ENCODE measurements at regions of chr9 and their contacts with region 1.

Region 1: DNA sequence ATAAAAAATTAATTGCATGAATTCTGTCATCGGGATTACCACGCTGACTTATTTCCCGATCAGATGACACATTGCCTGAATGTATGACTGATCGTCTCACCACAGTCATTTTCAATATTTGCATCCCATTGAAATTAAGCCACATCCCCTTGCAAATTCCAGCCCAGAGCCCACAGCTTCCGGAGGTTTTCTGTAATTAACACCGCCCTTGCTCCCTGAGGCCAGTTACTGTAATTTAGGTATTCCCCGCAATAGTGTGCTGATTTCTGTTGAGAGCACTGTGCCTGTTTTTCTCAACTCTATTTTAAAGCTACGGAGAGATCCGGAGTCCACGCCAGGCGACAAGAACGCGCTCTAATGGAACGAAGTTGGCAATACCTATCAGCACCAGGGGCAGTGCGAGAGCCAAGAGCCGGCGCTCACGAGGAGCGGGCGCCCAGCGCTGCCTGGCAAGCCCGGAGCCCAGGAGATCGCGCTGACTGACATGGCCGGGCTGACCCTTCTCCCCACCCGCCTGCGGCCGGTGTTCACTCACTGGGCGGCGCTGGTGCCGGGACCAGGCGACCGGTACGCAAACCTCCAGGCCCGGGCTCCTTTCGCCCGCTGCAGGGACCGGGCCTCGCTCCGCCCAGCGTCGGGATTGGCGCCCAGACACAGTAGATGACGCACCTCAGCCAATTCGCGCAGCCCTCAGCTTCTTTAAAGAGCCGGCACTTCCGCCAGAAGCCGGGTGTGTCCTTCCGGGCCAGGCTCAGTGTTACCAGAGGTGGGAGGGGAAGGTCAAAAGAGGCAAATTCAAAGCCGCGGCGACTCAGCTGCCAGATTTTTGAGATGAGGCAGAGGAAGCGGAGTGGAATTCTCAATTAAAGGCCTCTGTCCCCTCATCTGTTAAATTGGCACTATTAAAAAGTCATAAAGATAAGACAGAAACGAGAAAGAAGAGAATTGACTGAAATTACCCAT is at the start of gene PLGRKT:
- DNase-seq: peak; percentile 95
- H3K4me3 Mint-ChIP-seq: peak within 1 kb of the TSS; percentile 92
- H3K27ac Mint-ChIP-seq: peak within 1 kb of the TSS; percentile 98
- H3K4me1 Mint-ChIP-seq: peaks cover 51% of the 10 kb centered on the region
- H3K27me3 Mint-ChIP-seq: no peaks in the 10 kb centered on the region
- total RNA-seq, gene PLGRKT: 48.9 to 51.4 TPM

Region 2: DNA sequence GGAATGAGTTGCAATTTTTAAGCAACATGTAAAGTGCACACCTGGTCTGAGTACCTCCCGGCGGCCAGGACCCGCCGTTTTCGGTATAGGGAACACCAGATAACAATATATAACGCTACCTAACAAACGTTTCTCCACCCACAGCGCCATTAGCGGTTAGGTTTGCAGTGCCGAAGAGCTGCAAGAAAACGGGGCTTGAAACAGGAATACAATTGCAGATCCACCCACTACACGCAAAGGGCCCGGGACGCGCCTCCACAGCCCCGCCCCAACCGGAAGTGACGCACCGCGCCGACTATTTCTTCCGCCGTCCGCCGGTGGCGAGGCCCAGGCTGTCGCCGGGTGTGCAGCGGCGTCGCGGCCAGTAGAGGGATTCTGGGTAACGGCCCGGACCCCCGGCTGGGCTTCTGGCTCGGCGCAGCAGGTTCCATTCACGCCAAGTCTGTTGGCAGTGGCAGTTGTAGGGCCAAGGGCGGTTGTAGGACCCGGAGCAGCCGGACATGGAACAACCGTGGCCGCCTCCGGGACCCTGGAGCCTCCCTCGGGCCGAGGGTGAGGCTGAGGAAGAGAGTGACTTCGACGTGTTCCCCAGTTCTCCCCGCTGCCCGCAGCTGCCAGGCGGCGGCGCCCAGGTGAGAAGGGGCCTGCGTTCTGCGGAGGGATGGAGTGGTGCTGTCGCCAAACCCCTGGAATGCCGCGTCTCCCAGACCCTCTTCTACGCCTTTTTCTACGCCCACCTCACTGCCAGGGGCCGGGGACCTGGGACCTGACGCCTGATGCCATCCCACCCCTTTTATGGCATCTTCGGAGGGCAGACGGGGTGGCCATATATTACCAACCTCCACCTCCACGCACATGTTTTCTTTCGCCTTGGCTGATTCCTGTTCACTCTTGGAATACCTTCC is 758.0 kb before region 1 on chr9 and contains the start of gene CDC37L1:
- CTCF ChIA-PET with region 1: no interaction called
- intact Hi-C with region 1: loop called (anchors 2 kb)
- DNase-seq: peak; percentile 99
- H3K4me3 Mint-ChIP-seq: no peak within 1 kb of the TSS
- H3K27ac Mint-ChIP-seq: no peak within 1 kb of the TSS
- H3K4me1 Mint-ChIP-seq: peaks cover 17% of the 10 kb centered on the region
- H3K27me3 Mint-ChIP-seq: no peaks in the 10 kb centered on the region
- total RNA-seq, gene CDC37L1: 13.7 to 14.5 TPM

Region 3: GRCh38 chr9:4832786-4833579 is 604.6 kb before region 1 on chr9:
- CTCF ChIA-PET with region 1: no interaction called
- intact Hi-C with region 1: loop called (anchors 5 kb)
- DNase-seq: peak; percentile 80
- H3K4me3 Mint-ChIP-seq: no peak overlapping the region
- H3K27ac Mint-ChIP-seq: peak overlapping the region; percentile 85
- H3K4me1 Mint-ChIP-seq: peaks cover 46% of the 10 kb centered on the region
- H3K27me3 Mint-ChIP-seq: no peaks in the 10 kb centered on the region

Region 4: GRCh38 chr9:5186416-5187169 is 250.9 kb before region 1 on chr9:
- CTCF ChIA-PET with region 1: interaction called, 12 read pairs
- intact Hi-C with region 1: loop called (anchors 1 kb)
- DNase-seq: peak; percentile 79
- H3K4me3 Mint-ChIP-seq: no peak overlapping the region
- H3K27ac Mint-ChIP-seq: no peak overlapping the region
- H3K4me1 Mint-ChIP-seq: peaks cover 13% of the 10 kb centered on the region
- H3K27me3 Mint-ChIP-seq: no peaks in the 10 kb centered on the region

Region 5: DNA sequence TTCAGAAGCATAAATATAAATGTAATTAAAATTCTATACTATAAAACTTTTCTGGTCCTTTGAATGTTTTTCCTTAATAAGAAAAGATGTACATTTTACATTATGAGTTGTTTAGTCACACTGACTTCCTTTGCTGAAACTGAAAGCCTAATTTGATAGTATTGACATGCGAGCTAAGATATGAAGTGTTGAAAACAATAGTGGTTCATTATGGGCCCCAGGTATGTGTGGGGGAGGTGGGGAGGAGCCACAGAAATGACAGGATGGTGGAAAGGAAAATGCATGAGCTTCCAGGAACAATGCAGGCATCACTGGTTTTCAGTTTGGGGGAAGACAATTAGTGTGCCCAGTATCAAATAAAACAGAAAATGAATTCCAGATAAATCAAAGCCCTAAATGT is 62.4 kb before region 1 on chr9:
- CTCF ChIA-PET with region 1: no interaction called
- intact Hi-C with region 1: loop called (anchors 1 kb)
- DNase-seq: peak; percentile 74
- H3K4me3 Mint-ChIP-seq: peak overlapping the region; percentile 1
- H3K27ac Mint-ChIP-seq: no peak overlapping the region
- H3K4me1 Mint-ChIP-seq: peaks cover 31% of the 10 kb centered on the region
- H3K27me3 Mint-ChIP-seq: no peaks in the 10 kb centered on the region

Region 6: GRCh38 chr9:5721279-5722087 is 283.9 kb after region 1 on chr9:
- CTCF ChIA-PET with region 1: no interaction called
- intact Hi-C with region 1: no loop called
- DNase-seq: no peak
- H3K4me3 Mint-ChIP-seq: no peak overlapping the region
- H3K27ac Mint-ChIP-seq: no peak overlapping the region
- H3K4me1 Mint-ChIP-seq: peaks cover 8% of the 10 kb centered on the region
- H3K27me3 Mint-ChIP-seq: no peaks in the 10 kb centered on the region

Region 7: DNA sequence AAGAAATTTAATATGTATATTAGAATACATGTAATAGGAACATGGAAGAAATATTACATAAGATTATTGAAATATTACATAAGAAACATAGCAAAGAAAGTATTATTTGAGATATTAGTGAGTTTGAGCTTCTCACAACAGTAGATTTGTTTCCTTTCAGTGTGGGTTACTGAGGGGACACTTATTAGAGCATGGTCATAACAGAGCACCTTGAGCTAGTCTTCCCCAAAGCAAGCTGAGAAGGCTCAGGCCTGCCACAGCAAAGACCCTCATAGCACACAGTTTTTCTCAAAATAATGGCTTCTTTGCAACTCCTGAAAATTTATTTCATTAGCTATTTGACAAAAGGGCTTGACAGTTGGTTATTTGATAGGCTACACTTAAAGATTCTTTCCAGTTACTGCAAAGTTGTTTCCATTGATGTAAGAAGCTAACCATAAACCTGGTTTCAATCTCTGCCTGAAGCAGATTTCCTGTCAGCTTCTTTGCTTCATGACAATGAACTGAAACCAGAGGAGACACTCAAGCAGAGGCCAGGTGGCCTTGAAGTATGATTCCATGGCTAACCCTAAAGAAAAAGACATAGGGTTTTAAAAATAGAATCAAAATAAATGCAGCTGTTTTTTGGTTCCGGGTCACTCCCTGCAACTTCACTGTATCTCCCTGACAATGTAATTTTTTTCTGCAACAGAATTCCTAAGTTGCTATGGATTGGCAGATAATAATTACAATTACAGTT is 326.8 kb after region 1 on chr9:
- CTCF ChIA-PET with region 1: no interaction called
- intact Hi-C with region 1: loop called (anchors 5 kb)
- DNase-seq: peak; percentile 55
- H3K4me3 Mint-ChIP-seq: no peak overlapping the region
- H3K27ac Mint-ChIP-seq: peak overlapping the region; percentile 83
- H3K4me1 Mint-ChIP-seq: peaks cover 72% of the 10 kb centered on the region
- H3K27me3 Mint-ChIP-seq: no peaks in the 10 kb centered on the region

Measured in activated naive CD4-positive, alpha-beta T cell treated with anti-CD3 and anti-CD28 coated beads for 36 hours (primary cell).